ENCODE measurements at regions of chrX and their contacts with region 1.

Region 1: DNA sequence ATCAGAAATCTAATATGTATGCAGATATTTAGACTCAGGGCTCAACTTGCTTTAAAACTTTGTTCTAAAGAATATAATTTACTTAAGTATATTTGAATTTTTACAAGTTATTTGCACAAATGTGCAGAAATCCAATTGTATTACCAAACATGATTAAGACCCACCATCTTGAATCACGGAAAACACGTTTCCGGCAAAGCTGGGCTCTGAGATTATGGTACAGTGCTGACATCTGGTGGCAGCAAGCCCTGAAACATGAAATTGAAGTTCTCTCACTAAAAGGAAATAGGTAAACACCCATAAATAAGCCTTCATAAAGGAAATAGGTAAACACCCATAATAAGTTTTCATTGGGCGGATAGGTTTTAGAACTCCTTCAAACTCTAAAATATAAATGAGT is 98.3 kb upstream of the MAOA start:
- DNase-seq: no peak
- H3K4me3 ChIP-seq: no peak overlapping the region
- H3K27ac ChIP-seq: no peak overlapping the region
- H3K4me1 ChIP-seq: peaks cover 0 to 16% (median 4%) of the 10 kb centered on the region in 3 donors
- H3K27me3 ChIP-seq: peaks cover 0 to 5% (median 0%) of the 10 kb centered on the region in 4 donors
- CTCF ChIP-seq: peak in 5 of 6 experiments; percentile 59 to 73 (median 61)
- POLR2A ChIP-seq: no peak

Region 2: GRCh38 chrX:43357741-43358140 is 200.1 kb before region 1 on chrX:
- intact Hi-C with region 1: loop called (anchors 10 kb)
- DNase-seq: no peak
- H3K4me3 ChIP-seq: no peak overlapping the region
- H3K27ac ChIP-seq: no peak overlapping the region
- H3K4me1 ChIP-seq: no peaks in the 10 kb centered on the region
- H3K27me3 ChIP-seq: no peaks in the 10 kb centered on the region
- CTCF ChIP-seq: no peak
- POLR2A ChIP-seq: no peak

Region 3: DNA sequence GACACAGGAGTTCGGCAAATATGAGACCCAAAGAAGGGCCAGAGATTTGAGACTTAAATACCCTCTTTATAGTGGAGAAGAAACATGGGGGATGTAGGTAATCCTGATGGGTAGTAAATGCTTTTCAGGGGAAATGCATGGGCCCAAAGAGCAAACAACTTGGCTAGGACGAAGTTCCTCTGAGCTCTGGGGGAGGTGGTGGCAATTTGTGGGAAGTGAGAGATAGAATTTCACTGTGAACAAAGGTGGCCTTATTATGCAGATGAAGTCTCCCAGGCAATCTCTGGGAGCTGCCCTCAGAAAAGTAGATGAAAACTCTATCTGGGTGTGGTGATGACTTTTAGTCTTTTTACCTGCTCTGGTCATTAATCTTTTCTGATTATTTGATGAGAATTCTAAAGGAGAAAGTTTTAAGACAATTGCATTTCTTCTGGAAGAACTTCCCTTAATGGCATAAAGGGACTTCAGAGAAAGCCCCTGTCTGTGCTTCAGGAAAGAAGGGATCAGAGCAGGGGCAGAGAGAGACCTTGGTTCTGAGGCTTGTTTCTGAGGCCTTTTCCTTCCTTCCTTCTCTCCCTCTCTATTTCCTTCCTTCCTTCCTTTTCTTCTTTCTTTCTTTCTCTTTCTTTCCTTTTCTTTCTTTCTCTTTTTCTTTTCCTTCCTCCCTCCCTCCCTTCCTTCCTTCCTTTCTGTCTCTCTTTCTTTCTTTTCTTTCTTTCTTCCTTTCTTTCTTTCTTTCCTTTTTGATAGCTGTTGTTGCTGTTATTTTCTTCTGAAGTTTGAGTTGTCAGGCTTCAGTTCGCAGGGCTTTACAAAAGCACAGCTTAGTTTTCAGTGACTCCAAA is 60.8 kb after region 1 on chrX:
- intact Hi-C with region 1: no loop called
- DNase-seq: no peak
- H3K4me3 ChIP-seq: no peak overlapping the region
- H3K27ac ChIP-seq: no peak overlapping the region
- H3K4me1 ChIP-seq: peaks cover 0 to 13% (median 0%) of the 10 kb centered on the region in 3 donors
- H3K27me3 ChIP-seq: no peaks in the 10 kb centered on the region
- CTCF ChIP-seq: no peak
- POLR2A ChIP-seq: no peak

Region 4: DNA sequence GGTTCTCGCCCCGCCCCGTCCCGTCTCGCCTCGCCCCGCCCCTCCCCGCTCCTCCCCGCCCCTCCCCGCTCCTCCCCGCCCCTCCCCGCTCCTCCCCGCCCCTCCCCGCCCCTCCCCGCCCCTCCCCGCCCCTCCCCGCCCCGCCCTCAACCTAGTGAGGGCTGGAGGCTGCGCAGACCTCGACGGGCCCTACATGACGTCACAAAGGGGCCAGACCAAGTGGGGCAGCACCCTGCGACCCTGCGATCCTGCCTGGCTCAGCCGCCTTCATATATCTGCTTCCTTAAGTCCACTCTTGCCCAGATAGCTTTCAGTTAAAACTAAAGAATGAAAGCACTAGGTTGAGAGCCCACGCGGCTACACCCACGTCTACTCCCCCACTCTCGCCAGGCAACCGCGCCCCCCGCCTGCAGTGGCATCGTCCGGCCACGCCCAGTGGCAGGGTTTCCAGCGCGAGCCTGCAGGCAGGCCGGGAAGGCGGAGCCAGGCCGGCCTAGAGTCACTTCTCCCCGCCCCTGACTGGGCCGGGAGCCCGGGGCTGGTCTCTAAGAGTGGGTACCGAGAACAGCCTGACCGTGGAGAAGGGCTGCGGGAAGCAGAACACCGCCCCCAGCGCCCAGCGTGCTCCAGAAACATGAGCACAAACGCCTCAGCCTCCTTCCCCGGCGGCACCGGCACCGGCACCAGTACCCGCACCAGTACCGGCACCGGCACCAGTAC is 96.8 kb after region 1 on chrX:
- intact Hi-C with region 1: loop called (anchors 10 kb)
- DNase-seq: peak; percentile 50
- H3K4me3 ChIP-seq: peak overlapping the region; percentile 64 to 77 (median 74)
- H3K27ac ChIP-seq: peak overlapping the region; percentile 94 to 95 (median 95)
- H3K4me1 ChIP-seq: peaks cover 0 to 10% (median 0%) of the 10 kb centered on the region in 3 donors
- H3K27me3 ChIP-seq: no peaks in the 10 kb centered on the region
- CTCF ChIP-seq: peak in 2 of 6 experiments; percentile 28 to 30
- POLR2A ChIP-seq: peak in 3 of 4 donors; percentile 14 to 91 (median 83)

Region 5: GRCh38 chrX:43750248-43750676 is 192.5 kb after region 1 on chrX:
- intact Hi-C with region 1: loop called (anchors 10 kb)
- DNase-seq: no peak
- H3K4me3 ChIP-seq: no peak overlapping the region
- H3K27ac ChIP-seq: no peak overlapping the region
- H3K4me1 ChIP-seq: peaks cover 0 to 10% (median 3%) of the 10 kb centered on the region in 3 donors
- H3K27me3 ChIP-seq: no peaks in the 10 kb centered on the region
- CTCF ChIP-seq: peak; percentile 36 to 68 (median 54)
- POLR2A ChIP-seq: no peak

Measured in esophagus squamous epithelium (tissue), 5 donors.